Astrocyte of the cerebellum (primary cell): ENCODE measurements at regions of chr4 and their contacts with region 1.

Region 1: DNA sequence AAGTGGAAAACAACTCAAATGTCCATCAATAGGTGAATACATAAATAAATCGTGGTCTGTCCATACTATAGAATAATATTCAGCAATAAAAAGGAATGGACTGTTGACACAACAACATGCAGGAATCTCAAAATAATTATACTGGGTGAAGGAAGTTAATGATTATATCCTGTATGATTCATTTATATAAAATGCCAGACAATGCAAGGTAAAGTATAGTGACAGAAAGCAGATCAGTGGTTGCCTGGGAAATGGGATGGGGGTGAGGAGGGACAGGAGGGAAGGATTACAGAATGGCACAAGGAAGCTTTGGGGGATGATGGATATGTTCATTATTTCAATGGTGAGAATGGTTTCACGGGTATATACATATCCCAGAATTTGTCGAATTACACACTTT is 12.3 kb downstream of the PYURF start:
- DNase-seq: no peak
- H3K4me3 ChIP-seq: no peak overlapping the region
- CTCF ChIP-seq: no peak

Region 2: GRCh38 chr4:88216395-88216794 is 294.8 kb before region 1 on chr4:
- in situ Hi-C with region 1: loop called (anchors 5 kb)
- DNase-seq: no peak
- H3K4me3 ChIP-seq: no peak overlapping the region
- CTCF ChIP-seq: no peak

Region 3: DNA sequence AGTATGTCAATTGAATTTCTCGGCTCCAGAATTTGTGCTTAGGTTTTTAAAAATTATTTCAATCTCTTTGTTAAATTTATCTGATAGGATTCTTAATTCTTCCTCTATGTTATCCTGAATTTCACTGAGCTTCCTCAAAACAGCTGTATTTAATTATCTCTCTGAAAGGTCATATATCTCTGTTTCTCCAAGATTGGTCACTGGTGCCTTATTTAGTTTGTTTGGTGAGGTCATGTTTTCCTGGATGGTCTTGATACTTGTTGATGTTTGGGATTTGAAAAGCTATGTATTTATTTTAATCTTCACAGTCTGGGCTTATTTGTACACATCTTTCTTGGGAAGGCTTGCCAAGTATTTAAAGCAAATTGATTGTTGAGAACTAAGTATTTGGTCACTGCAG is 56.4 kb after region 1 on chr4:
- in situ Hi-C with region 1: no loop called
- DNase-seq: no peak
- H3K4me3 ChIP-seq: no peak overlapping the region
- CTCF ChIP-seq: no peak